Ovary (tissue), 10 donors: ENCODE measurements at regions of chr19 and their contacts with region 1.

Region 1: GRCh38 chr19:55563261-55563690 is 17.4 kb downstream of the ZNF579 start:
- DNase-seq: no peak
- H3K4me3 ChIP-seq: no peak overlapping the region
- H3K27ac ChIP-seq: no peak overlapping the region
- H3K4me1 ChIP-seq: no peaks in the 10 kb centered on the region
- H3K27me3 ChIP-seq: no peaks in the 10 kb centered on the region
- CTCF ChIP-seq: no peak
- EP300 ChIP-seq: no peak
- POLR2A ChIP-seq: no peak

Region 2: GRCh38 chr19:54073829-54074228 is 1489.4 kb before region 1 on chr19:
- intact Hi-C with region 1: loop called in 1 of 4 experiments (anchors 5 kb)
- DNase-seq: no peak
- H3K4me3 ChIP-seq: no peak overlapping the region
- H3K27ac ChIP-seq: no peak overlapping the region
- H3K4me1 ChIP-seq: no peaks in the 10 kb centered on the region
- H3K27me3 ChIP-seq: no peaks in the 10 kb centered on the region
- CTCF ChIP-seq: no peak
- EP300 ChIP-seq: no peak
- POLR2A ChIP-seq: no peak

Region 3: DNA sequence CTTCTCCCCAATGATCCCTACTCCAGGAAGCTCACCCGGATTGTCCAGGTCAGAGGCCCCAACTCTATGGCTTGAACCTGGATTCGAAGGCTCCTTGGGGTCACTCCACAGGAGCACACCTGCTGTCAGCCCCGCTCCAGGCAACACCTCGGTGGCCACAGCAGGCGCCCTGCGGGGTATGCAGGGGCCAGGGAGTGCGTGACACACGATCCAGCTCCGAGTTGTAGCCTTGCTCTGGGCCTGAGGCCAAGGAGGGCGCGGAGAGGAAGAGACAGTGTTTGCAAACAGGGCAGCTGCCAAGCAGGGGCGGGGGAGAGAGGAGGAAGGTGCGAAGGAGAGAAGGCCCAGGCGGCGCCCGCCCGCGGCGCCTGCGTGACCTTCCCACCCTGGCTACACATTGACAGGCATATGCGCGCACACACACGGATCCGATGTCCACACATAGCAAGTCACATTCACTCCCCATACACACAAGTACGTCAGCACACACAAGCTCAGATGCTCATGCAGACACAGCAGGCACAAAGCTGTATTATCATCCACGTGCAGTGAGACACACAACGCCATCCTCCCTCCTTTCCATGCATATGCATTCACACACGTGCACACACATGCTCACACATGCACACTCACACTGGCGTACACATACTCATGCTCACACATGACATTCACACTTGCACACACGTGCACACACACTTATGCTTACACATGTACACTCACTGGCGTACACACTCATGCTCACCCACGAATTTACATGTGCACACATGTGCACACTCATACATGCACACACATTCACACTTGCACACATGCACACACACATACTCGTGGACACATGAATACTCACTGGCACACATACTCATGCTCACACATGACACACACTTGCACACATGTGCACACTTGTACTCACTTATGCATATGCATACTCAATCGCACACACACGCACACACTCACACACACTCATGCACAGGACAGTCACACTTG is 36.8 kb before region 1 on chr19:
- intact Hi-C with region 1: loop called in 1 of 4 experiments (anchors 5 kb)
- DNase-seq: peak in 3 of 5 donors; percentile 50 to 74 (median 63)
- H3K4me3 ChIP-seq: no peak overlapping the region
- H3K27ac ChIP-seq: no peak overlapping the region
- H3K4me1 ChIP-seq: peaks cover 2% of the 10 kb centered on the region
- H3K27me3 ChIP-seq: no peaks in the 10 kb centered on the region
- CTCF ChIP-seq: no peak
- EP300 ChIP-seq: no peak
- POLR2A ChIP-seq: no peak